B cell (primary cell): ENCODE measurements at regions of chr15 and their contacts with region 1.

Region 1: DNA sequence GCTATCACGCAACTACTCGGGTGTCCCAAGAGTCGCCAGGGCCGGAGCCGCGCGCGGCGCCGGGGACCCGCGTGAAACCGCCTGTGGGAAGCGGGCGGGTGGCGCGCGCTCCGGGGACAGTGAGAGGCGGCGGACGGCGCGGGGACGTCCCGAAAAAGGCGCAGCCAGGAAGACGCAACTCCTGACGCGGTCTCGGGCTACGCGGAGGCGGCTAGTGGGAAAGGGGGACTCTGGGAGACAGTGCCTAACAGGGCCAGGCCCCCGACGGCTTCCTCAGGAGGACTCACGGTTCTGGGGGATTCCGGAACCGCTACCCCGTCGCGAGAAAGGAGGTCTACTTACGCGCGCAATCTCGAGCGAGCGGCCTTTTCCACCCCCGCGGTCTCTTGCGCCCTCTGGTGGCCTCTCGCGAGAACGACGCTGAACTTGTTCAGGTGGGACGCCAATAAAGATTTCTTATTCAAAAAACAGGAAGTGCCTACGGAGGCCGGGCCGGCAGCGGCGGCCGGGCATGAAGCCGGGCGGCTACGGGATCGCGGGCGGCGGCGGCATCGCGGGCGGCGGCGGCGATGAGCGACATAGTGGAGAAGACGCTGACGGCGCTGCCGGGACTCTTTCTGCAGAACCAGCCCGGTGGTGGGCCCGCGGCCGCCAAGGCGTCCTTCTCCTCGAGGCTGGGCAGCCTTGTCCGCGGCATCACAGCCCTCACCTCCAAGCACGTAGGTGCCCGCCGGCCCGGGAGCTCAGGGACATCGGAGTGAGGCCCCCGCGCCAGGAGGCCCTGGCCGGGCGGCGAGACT is at the start of gene AP4E1:
- DNase-seq: peak; percentile 98
- ATAC-seq: peak; percentile 66
- H3K4me3 ChIP-seq: peak within 1 kb of the TSS; percentile 79 to 99 (median 96)
- H3K4me3 Mint-ChIP-seq: peak within 1 kb of the TSS; percentile 95
- H3K27ac ChIP-seq: peak within 1 kb of the TSS; percentile 92 to 100
- H3K27ac Mint-ChIP-seq: peak within 1 kb of the TSS; percentile 99
- H3K4me1 ChIP-seq: peaks cover 12 to 33% of the 10 kb centered on the region in 2 donors
- H3K4me1 Mint-ChIP-seq: peaks cover 31% of the 10 kb centered on the region
- H3K27me3 ChIP-seq: no peaks in the 10 kb centered on the region
- H3K27me3 Mint-ChIP-seq: no peaks in the 10 kb centered on the region
- CTCF ChIP-seq: peak; percentile 89
- total RNA-seq, gene AP4E1: 12.0 and 12.6 TPM in 2 replicates

Region 2: DNA sequence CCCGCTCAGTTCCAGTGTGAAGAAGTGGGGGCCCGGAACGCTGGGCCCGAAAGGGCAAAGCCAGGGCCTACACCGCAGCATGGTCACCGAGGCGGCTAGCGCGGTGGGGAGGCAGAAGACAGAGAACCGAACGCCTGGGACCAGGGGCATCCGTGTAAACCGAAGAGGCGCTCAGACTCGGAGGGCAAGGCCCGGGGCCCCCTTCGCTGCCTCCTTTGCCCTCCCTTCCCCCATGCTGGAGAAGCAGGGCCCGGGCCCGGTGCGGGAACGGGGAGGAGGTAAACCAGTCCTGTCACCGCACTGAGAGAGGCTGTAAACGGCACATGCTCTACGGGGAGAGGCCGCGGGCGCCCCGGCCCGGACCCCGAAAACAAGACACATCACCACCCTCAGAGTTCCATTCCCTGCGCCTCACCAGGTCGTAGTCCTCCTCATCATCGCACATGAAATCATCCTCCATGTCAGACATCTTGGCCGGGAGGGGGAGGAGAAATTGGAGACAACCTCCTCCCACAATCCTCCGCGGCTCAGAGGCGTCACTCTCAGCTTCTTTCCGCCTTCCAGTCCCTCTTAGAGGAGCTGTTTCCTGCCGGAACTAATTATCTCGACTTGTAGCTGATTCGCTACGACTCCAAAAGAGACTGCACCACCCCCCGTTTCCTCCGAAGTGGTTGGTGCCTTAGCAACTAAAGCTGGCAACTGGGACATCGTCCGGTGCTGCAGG is 1753.1 kb before region 1 on chr15 and contains the start of gene COPS2:
- CTCF ChIA-PET with region 1: no interaction called
- POLR2A ChIA-PET with region 1: no interaction called
- intact Hi-C with region 1: loop called (anchors 1 kb)
- DNase-seq: peak; percentile 97
- ATAC-seq: peak; percentile 93
- H3K4me3 ChIP-seq: peak within 1 kb of the TSS; percentile 80 to 99 (median 90)
- H3K4me3 Mint-ChIP-seq: peak within 1 kb of the TSS; percentile 98
- H3K27ac ChIP-seq: peak within 1 kb of the TSS; percentile 92 to 94
- H3K27ac Mint-ChIP-seq: peak within 1 kb of the TSS; percentile 96
- H3K4me1 ChIP-seq: peaks cover 11 to 25% of the 10 kb centered on the region in 2 donors
- H3K4me1 Mint-ChIP-seq: peaks cover 41% of the 10 kb centered on the region
- H3K27me3 ChIP-seq: no peaks in the 10 kb centered on the region
- H3K27me3 Mint-ChIP-seq: no peaks in the 10 kb centered on the region
- CTCF ChIP-seq: peak; percentile 9
- total RNA-seq, gene COPS2: 44.5 and 47.8 TPM in 2 replicates

Region 3: DNA sequence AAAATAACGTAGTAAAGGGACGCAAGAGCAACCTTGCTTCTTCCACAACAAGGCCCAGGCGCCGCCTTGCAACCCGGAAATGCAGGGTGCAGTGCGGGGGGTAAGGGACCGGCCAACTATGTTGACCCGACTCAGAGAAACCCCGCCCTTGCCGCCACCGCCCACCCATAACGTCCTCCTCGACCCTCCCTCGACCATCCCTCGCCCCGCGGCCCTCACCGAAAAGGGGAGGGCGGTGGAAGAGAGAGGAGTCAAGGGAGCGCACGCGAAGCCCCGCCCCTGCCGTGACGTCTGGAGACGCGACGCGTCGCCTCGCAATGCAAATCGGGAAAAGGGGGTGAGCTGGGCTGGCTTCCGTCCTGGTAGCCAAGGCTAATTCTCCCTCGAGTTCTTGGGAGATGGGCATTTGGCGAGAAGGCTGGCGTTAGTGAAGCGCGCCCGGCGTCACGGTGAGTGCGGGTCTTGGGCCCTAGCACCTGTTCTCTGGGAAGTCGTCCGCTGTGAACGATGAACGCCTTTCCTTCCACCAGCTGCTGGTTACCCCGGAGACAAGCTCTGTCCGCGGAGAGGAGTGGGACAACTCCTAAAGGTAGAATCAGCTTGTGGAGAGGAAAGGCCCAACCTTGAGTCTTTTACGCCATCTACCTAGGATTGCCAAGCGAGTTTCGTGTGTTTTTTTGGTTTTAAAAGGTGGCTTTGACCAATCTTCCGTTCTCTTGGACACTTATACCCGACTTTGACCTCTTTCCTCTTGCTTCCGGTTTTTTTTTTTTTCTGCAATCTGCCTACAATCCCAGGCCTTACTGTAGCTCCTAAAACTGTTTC is 484.1 kb before region 1 on chr15 and contains the start of gene USP8:
- CTCF ChIA-PET with region 1: interaction called, 4 read pairs
- POLR2A ChIA-PET with region 1: no interaction called
- intact Hi-C with region 1: loop called (anchors 1 kb)
- DNase-seq: peak; percentile 97
- ATAC-seq: peak; percentile 97
- H3K4me3 ChIP-seq: peak within 1 kb of the TSS; percentile 78 to 100 (median 83)
- H3K4me3 Mint-ChIP-seq: peak within 1 kb of the TSS; percentile 98
- H3K27ac ChIP-seq: peak within 1 kb of the TSS; percentile 95 to 98
- H3K27ac Mint-ChIP-seq: peak within 1 kb of the TSS; percentile 96
- H3K4me1 ChIP-seq: peaks cover 19 to 22% of the 10 kb centered on the region in 2 donors
- H3K4me1 Mint-ChIP-seq: peaks cover 37% of the 10 kb centered on the region
- H3K27me3 ChIP-seq: no peaks in the 10 kb centered on the region
- H3K27me3 Mint-ChIP-seq: no peaks in the 10 kb centered on the region
- CTCF ChIP-seq: no peak
- total RNA-seq, gene USP8: 126 TPM in 2 replicates

Region 4: GRCh38 chr15:50686468-50687301 is 221.7 kb before region 1 on chr15 and contains the start of gene TRPM7:
- CTCF ChIA-PET with region 1: no interaction called
- POLR2A ChIA-PET with region 1: no interaction called
- intact Hi-C with region 1: loop called (anchors 1 kb)
- DNase-seq: peak; percentile 97
- ATAC-seq: peak; percentile 81
- H3K4me3 ChIP-seq: peak within 1 kb of the TSS; percentile 74 to 100 (median 96)
- H3K4me3 Mint-ChIP-seq: peak within 1 kb of the TSS; percentile 100
- H3K27ac ChIP-seq: peak within 1 kb of the TSS; percentile 98 to 100
- H3K27ac Mint-ChIP-seq: peak within 1 kb of the TSS; percentile 99
- H3K4me1 ChIP-seq: peaks cover 19 to 24% of the 10 kb centered on the region in 2 donors
- H3K4me1 Mint-ChIP-seq: peaks cover 46% of the 10 kb centered on the region
- H3K27me3 ChIP-seq: no peaks in the 10 kb centered on the region
- H3K27me3 Mint-ChIP-seq: no peaks in the 10 kb centered on the region
- CTCF ChIP-seq: no peak
- total RNA-seq, gene TRPM7: 77.2 and 86.4 TPM in 2 replicates

Region 5: GRCh38 chr15:50876989-50877360 is 31.4 kb before region 1 on chr15:
- CTCF ChIA-PET with region 1: interaction called, 12 read pairs
- POLR2A ChIA-PET with region 1: no interaction called
- intact Hi-C with region 1: no loop called
- DNase-seq: peak; percentile 82
- ATAC-seq: peak; percentile 82
- H3K4me3 ChIP-seq: peak overlapping the region in 4 of 5 experiments; percentile 19 to 52 (median 46)
- H3K4me3 Mint-ChIP-seq: peak overlapping the region; percentile 83
- H3K27ac ChIP-seq: no peak overlapping the region
- H3K27ac Mint-ChIP-seq: peak overlapping the region; percentile 21
- H3K4me1 ChIP-seq: peaks cover 3 to 22% of the 10 kb centered on the region in 2 donors
- H3K4me1 Mint-ChIP-seq: peaks cover 34% of the 10 kb centered on the region
- H3K27me3 ChIP-seq: no peaks in the 10 kb centered on the region
- H3K27me3 Mint-ChIP-seq: no peaks in the 10 kb centered on the region
- CTCF ChIP-seq: peak; percentile 99

Region 6: DNA sequence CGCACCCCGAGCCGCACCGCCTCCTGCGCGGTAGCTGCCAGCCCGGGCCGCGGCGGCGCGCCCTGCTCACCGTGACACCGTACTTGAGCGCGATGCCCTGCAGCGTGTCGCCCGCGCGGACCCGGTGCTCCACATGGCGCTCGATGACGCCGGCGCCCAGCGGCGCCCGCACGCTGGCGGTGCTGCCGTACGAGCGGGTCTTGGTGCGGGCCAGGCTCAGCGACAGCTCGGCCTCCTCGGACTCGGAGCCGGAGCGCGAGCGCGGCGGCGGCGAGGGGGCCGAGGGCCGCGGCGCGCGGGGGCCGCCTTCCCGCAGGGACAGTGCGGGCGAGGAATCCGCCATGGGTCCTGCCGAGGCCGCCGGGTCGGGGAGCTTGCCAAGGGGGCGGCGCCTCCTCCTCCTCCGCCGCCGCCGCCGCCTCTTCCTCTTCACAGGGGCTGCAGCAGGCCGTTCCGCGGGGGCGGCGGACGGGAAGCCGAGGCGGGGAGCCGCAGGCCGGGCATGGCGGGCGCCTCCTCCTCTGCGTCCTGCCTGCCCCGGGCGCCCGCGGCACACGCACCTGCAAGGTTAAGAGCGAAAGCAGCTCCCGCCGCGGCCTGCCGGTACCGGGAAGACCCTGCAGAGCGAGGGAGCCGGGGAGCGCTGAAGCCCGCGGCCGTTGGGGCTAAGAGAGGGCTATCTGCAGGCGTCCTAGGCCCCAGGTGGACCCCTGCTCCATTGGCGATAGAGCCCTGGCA is 829.0 kb after region 1 on chr15 and contains the start of gene LYSMD2:
- CTCF ChIA-PET with region 1: interaction called, 3 read pairs
- POLR2A ChIA-PET with region 1: no interaction called
- intact Hi-C with region 1: loop called (anchors 5 kb)
- DNase-seq: peak; percentile 82
- ATAC-seq: peak; percentile 67
- H3K4me3 ChIP-seq: peak within 1 kb of the TSS; percentile 68 to 93 (median 73)
- H3K4me3 Mint-ChIP-seq: peak within 1 kb of the TSS; percentile 98
- H3K27ac ChIP-seq: peak within 1 kb of the TSS; percentile 87 to 89
- H3K27ac Mint-ChIP-seq: peak within 1 kb of the TSS; percentile 95
- H3K4me1 ChIP-seq: peaks cover 49 to 53% of the 10 kb centered on the region in 2 donors
- H3K4me1 Mint-ChIP-seq: peaks cover 55% of the 10 kb centered on the region
- H3K27me3 ChIP-seq: no peaks in the 10 kb centered on the region
- H3K27me3 Mint-ChIP-seq: no peaks in the 10 kb centered on the region
- CTCF ChIP-seq: no peak
- total RNA-seq, gene LYSMD2: 48.2 and 49.4 TPM in 2 replicates